ENCODE measurements at regions of chr10 and their contacts with region 1.

Region 1: DNA sequence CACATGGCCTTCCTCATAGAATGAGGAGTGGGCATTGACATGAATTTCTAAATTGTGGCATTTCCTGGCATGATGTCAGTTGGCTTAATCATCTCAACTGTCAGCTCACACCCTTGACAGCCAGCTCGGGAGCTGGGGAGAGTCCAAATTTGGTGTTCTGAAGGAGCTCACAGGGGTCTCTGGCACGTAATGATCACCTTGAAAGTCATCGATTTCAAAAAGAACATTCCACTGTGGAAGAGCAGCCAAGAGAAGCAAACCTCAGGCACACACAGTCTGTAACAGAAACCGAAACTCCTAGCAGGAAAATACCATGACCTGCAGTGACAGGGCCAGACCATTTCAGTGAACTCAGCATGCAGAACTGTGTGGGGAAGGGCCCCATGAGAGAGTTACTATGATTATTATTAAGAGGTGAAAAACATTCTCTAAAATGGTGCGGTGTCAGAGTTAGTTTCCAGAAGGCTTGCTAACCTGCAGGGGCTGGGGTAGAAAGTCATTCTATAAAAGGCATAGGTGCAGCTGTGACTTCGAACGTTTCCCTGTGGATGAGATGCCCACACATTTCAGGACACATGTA is 26.4 kb upstream of the KLF6 start:
- DNase-seq: peak; percentile 98
- H3K4me3 ChIP-seq: no peak overlapping the region
- H3K27ac ChIP-seq: peak overlapping the region; percentile 100
- H3K4me1 ChIP-seq: peaks cover 50% of the 10 kb centered on the region
- H3K27me3 ChIP-seq: no peaks in the 10 kb centered on the region
- CTCF ChIP-seq: no peak

Region 2: GRCh38 chr10:3625959-3626751 is 185.2 kb before region 1 on chr10:
- CTCF ChIA-PET with region 1: no interaction called
- dilution Hi-C with region 1: no loop called
- in situ Hi-C with region 1: no loop called
- intact Hi-C with region 1: no loop called
- DNase-seq: peak; percentile 62
- H3K4me3 ChIP-seq: no peak overlapping the region
- H3K27ac ChIP-seq: no peak overlapping the region
- H3K4me1 ChIP-seq: no peaks in the 10 kb centered on the region
- H3K27me3 ChIP-seq: no peaks in the 10 kb centered on the region
- CTCF ChIP-seq: no peak

Region 3: DNA sequence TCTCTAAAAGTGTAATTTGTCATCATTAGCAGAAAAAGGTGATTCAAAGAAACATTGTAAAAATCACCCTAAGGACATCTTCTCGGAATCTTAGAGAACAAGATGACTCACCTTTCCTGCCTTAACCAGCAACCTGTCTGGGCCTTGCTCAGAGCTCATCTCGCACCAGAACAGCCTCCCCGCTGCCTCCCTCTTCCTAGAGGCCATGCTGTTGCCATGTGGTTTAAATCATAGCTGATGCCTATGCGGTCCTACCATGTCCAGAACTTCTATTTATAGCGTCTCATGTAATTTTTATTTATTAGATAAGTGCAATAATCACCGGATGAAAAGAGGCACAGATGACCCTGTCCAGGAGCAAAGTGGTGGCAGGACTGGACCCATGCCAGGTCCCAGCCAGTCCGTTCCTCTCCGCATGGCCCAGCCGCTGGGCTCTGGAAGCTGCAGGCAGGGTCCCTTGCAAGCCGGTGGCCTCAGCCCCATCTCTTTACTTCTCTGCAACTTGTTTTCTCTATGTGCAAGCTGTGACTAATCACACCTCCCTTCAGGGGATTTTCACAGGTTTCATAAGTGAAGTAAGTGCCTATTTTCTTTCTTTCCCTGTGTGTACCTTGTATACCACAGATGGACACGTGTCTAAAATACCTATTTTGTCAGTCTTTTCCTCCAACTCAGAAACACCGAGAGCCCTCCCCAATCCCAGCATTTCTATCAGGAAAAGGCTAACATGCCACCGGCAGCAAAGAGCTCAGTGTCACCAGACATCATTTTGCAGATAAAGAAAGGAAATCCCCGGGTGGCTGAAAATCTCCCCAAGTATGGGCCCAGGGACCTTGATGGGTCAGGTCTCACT is 53.5 kb before region 1 on chr10:
- CTCF ChIA-PET with region 1: no interaction called
- dilution Hi-C with region 1: loop called (anchors 5 kb)
- in situ Hi-C with region 1: no loop called
- intact Hi-C with region 1: no loop called
- DNase-seq: peak; percentile 96
- H3K4me3 ChIP-seq: no peak overlapping the region
- H3K27ac ChIP-seq: peak overlapping the region; percentile 90
- H3K4me1 ChIP-seq: peaks cover 60% of the 10 kb centered on the region
- H3K27me3 ChIP-seq: no peaks in the 10 kb centered on the region
- CTCF ChIP-seq: no peak

Region 4: GRCh38 chr10:3852147-3852904 is 40.9 kb after region 1 on chr10:
- CTCF ChIA-PET with region 1: no interaction called
- dilution Hi-C with region 1: no loop called
- in situ Hi-C with region 1: no loop called
- intact Hi-C with region 1: loop called (anchors 1 kb)
- DNase-seq: peak; percentile 100
- H3K4me3 ChIP-seq: no peak overlapping the region
- H3K27ac ChIP-seq: peak overlapping the region; percentile 99
- H3K4me1 ChIP-seq: peaks cover 39% of the 10 kb centered on the region
- H3K27me3 ChIP-seq: no peaks in the 10 kb centered on the region
- CTCF ChIP-seq: no peak

Region 5: GRCh38 chr10:3911713-3912442 is 100.5 kb after region 1 on chr10:
- CTCF ChIA-PET with region 1: no interaction called
- dilution Hi-C with region 1: no loop called
- in situ Hi-C with region 1: no loop called
- intact Hi-C with region 1: loop called (anchors 2 kb)
- DNase-seq: peak; percentile 85
- H3K4me3 ChIP-seq: peak overlapping the region; percentile 25 to 38 (median 32)
- H3K27ac ChIP-seq: peak overlapping the region; percentile 93
- H3K4me1 ChIP-seq: peaks cover 14% of the 10 kb centered on the region
- H3K27me3 ChIP-seq: no peaks in the 10 kb centered on the region
- CTCF ChIP-seq: no peak

Region 6: DNA sequence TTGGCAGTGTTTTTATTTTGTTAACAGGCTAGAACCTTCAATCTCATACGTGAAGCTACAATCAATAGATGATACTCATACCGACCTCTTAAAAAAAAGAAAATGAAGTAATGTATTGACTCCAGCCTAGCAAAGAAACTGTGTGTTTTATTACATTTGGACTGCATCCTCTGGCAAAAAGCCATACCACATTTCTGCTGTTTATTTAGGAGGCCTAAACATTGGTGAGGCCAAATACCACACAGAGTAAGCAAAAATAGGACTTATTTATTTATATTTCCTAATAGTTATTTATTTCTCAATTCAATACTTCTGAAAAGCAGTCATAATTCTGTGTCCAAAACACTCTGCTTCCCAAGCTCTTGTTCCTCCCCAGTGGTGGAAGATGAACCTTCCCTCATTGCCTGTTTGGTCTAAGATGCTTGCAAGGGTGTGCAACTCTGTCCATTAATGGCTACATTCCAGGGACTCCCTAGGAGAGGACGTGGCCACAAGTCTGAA is 372.4 kb after region 1 on chr10:
- CTCF ChIA-PET with region 1: no interaction called
- dilution Hi-C with region 1: no loop called
- in situ Hi-C with region 1: no loop called
- intact Hi-C with region 1: no loop called
- DNase-seq: no peak
- H3K4me3 ChIP-seq: no peak overlapping the region
- H3K27ac ChIP-seq: no peak overlapping the region
- H3K4me1 ChIP-seq: no peaks in the 10 kb centered on the region
- H3K27me3 ChIP-seq: no peaks in the 10 kb centered on the region
- CTCF ChIP-seq: no peak

Region 7: DNA sequence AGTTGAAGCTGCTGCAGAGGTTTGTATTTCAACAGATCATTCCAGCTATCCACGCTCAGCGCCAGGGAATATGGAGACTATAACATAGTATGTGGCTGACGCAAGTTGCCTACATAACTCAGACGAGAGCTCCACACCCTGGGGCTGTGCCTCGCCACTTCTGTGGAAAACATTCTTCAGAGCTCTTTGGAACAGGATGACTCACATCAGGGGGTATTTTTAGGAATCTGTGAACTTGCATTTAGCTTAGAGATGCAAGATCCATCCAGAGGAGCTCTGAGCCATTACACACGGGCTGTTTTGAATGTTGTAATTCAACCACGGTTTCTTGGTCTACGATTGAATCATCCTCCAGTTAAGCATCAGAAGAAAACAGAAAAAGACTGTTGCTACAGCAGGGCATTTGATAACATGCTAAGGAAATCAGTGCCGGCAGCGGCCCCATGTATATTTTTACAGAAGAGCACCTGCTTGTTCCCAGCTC is 533.2 kb after region 1 on chr10:
- CTCF ChIA-PET with region 1: no interaction called
- dilution Hi-C with region 1: loop called (anchors 25 kb)
- in situ Hi-C with region 1: no loop called
- intact Hi-C with region 1: loop called (anchors 1 kb)
- DNase-seq: peak; percentile 99
- H3K4me3 ChIP-seq: no peak overlapping the region
- H3K27ac ChIP-seq: peak overlapping the region; percentile 90
- H3K4me1 ChIP-seq: peaks cover 16% of the 10 kb centered on the region
- H3K27me3 ChIP-seq: no peaks in the 10 kb centered on the region
- CTCF ChIP-seq: no peak

Region 8: DNA sequence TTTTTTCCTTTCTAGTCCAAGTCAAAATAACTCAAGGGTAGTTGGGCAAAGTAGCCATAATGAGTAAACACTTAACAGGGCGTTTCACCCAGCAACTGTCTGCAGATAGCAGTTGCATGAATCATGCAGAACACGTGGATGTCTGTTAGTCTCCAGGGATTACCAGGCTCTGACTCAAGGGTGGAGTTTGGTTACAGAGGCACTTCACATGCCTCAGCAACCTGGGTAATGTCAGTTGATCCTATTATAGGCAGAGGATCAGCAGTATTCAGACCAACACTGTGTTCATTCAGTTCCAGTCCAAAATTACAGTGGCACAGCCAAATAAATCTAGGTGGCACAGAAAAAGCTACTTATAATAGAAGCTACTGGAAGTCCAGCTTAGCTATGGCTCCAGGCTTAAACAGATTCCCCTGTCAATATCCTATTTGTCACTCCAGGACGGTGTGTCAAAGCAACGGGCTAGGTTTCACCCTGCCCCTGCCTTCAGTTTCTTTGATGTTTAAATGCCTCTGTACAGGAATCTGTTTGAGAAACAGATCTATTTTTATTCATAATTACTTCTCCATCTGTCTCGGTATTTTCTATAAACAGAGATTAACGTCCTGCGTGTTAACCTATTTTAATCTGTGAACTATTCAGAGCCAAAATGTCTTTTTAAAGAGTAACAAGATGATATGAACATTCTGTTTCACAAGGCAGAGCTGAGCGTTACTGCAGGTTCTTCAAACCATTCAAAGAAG is 852.0 kb after region 1 on chr10:
- CTCF ChIA-PET with region 1: no interaction called
- dilution Hi-C with region 1: no loop called
- in situ Hi-C with region 1: no loop called
- intact Hi-C with region 1: loop called (anchors 2 kb)
- DNase-seq: peak; percentile 99
- H3K4me3 ChIP-seq: no peak overlapping the region
- H3K27ac ChIP-seq: peak overlapping the region; percentile 100
- H3K4me1 ChIP-seq: peaks cover 28% of the 10 kb centered on the region
- H3K27me3 ChIP-seq: no peaks in the 10 kb centered on the region
- CTCF ChIP-seq: no peak

Measured in mammary epithelial cell (primary cell).